H1 (cell line): ENCODE measurements at regions of chr15 and their contacts with region 1.

Region 1: DNA sequence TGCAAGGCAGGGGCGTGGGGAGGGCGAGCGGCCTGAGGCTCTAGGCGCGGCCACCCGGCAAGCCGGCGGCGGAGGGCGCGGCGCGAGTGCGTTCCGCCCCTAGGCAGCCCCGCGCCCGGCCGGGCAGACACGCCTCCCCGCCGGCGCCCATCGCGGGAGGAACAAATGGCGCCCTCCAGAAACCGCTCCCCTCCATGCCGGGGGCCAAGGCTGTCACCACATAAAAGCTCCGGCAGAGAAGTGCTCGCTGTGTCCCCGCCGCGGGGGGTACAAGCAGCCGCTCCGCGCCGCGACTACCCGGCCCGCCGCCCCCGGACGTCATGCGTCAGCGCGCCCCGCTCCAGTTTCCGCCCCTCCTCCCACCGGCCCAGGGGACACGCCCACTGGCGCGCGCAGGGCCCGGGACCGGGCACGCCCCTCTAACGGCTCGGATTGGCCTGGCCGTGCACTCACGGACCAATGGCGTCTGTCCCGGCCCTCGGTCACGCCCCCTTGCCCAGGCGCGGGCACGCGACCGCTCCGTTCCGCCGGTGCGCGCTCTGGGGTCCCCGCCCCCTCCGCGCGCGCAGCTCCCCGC is 391 bp upstream of the KLF13 start:
- DNase-seq: peak; percentile 90 to 99
- H3K4me3 ChIP-seq: peak overlapping the region; percentile 73 to 83 (median 76)
- H3K27ac ChIP-seq: peak overlapping the region; percentile 55; the same call in 1 of the 2 replicates
- H3K4me1 ChIP-seq: peaks cover 3 to 17% (median 7%) of the 10 kb centered on the region in 4 experiments
- H3K27me3 ChIP-seq: peaks cover 0 to 7% (median 3%) of the 10 kb centered on the region in 4 experiments; a peak in 3 of 7 replicates
- CTCF ChIP-seq: no peak
- EP300 ChIP-seq: no peak
- POLR2A ChIP-seq: no peak
- RAD21 ChIP-seq: no peak

Region 2: DNA sequence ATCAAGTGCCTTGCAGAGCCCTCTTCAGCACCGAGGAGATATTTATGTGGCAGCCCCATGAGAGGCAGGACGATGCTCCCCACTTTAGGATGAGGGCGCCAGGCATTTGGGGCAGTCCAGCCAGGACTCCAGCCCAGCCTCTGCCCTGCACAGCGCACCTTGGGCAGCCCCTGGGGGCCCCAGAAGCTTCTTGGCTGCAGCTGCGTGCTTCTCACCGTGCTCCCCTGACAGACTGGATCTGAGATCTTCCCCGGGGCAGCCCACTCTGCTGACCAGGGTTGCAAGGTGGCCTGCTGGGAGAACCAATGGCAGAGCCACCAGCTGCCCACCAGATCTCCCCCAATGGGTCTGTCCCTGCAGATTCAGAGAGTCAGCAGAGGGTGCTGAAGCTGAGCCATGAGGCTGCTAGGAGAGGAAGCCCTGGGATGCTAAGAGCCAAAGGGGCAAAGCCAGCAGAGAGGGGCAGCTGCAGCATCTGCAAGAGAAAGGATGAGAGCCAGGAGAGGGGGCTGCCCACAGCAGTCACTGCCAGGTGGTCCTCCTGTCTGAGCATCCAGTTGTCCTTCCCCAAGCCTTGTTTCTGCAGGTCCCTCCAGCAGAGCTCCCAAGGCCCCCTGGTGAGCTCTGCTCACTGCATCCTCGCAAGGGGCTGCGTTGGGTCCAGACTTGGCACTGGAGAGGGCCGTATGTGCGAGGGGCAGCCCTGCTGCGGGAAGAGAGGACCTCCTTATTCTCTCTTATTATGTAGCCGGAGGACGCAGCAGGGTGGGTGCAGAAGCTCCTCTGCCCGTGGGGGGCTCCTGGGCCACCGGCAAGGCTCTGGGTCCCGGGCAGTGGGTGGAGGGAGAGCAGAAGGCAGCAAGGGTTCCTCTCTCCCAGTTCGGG is 14.3 kb before region 1 on chr15:
- CTCF ChIA-PET with region 1: interaction called, 10 read pairs
- POLR2A ChIA-PET with region 1: interaction called, 7 read pairs
- DNase-seq: peak in 1 of 2 experiments; percentile 44
- H3K4me3 ChIP-seq: no peak overlapping the region
- H3K27ac ChIP-seq: no peak overlapping the region
- H3K4me1 ChIP-seq: peaks cover 9 to 28% (median 24%) of the 10 kb centered on the region in 4 experiments
- H3K27me3 ChIP-seq: no peaks in the 10 kb centered on the region
- CTCF ChIP-seq: no peak
- EP300 ChIP-seq: no peak
- POLR2A ChIP-seq: no peak
- RAD21 ChIP-seq: no peak